Activated B cell treated with CpG ODN at 0.5 μM for 24 hours (primary cell): ENCODE measurements at regions of chr1 and their contacts with region 1.

Region 1: GRCh38 chr1:36450270-36450918 is at the start of gene OSCP1:
- DNase-seq: peak; percentile 88
- ATAC-seq: peak; percentile 97
- H3K4me3 Mint-ChIP-seq: peak within 1 kb of the TSS; percentile 90
- H3K27ac Mint-ChIP-seq: peak within 1 kb of the TSS; percentile 97
- H3K4me1 Mint-ChIP-seq: peaks cover 18% of the 10 kb centered on the region
- H3K27me3 Mint-ChIP-seq: no peaks in the 10 kb centered on the region
- CTCF ChIP-seq: no peak
- total RNA-seq, gene OSCP1: 1.2 and 1.8 TPM in 2 replicates

Region 2: DNA sequence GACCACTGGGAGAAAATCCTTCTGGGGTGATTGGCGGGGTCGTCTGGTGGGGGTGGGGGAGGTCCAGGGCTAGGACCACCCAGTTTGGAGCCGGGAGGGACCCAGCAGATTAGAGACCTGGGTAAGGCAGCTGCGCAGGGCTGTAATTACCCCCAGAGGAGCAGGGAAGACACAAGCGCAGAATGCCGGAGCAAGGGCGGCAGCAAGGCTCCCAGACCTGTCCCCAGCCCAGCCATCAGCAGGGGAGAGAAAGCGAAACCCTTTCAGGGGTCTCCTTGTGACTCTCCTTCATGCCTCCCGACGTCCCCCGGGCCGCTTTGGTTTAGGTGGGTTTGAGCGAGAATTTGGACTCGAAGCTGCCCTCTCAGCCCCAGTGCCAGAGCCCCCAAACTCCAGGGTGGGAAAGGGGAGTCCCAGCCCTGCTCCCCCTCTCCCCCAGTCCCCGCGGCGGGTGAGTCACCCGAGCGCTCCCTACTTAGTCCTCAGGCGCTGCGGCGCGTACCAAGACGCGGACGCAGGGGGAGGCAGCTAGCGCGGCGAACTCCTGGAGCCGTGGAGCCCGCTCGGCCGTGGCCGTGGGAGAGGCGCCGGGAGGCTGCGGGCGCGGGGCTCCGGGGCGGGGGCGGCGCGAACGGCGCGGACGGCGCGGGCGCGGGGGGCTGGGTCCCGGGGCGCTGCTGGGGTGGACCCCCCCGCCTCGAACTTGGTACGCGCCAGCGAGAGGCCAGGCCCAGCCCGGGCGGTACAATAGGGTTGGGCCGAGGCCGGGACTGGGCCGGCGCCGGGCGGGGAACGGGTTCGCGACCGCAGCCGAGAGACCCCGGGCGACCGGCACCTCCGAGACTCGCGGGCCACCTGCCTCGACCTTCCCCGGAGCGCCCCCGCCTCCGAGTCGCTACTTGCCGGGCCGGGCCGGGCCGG is 294.7 kb before region 1 on chr1 and contains the start of gene MAP7D1:
- CTCF ChIA-PET with region 1: no interaction called
- POLR2A ChIA-PET with region 1: no interaction called
- intact Hi-C with region 1: loop called (anchors 2 kb)
- DNase-seq: peak; percentile 88
- ATAC-seq: peak; percentile 76
- H3K4me3 Mint-ChIP-seq: peak within 1 kb of the TSS; percentile 89
- H3K27ac Mint-ChIP-seq: peak within 1 kb of the TSS; percentile 90
- H3K4me1 Mint-ChIP-seq: peaks cover 65% of the 10 kb centered on the region
- H3K27me3 Mint-ChIP-seq: no peaks in the 10 kb centered on the region
- CTCF ChIP-seq: no peak
- total RNA-seq, gene MAP7D1: 56.5 and 59.9 TPM in 2 replicates

Region 3: DNA sequence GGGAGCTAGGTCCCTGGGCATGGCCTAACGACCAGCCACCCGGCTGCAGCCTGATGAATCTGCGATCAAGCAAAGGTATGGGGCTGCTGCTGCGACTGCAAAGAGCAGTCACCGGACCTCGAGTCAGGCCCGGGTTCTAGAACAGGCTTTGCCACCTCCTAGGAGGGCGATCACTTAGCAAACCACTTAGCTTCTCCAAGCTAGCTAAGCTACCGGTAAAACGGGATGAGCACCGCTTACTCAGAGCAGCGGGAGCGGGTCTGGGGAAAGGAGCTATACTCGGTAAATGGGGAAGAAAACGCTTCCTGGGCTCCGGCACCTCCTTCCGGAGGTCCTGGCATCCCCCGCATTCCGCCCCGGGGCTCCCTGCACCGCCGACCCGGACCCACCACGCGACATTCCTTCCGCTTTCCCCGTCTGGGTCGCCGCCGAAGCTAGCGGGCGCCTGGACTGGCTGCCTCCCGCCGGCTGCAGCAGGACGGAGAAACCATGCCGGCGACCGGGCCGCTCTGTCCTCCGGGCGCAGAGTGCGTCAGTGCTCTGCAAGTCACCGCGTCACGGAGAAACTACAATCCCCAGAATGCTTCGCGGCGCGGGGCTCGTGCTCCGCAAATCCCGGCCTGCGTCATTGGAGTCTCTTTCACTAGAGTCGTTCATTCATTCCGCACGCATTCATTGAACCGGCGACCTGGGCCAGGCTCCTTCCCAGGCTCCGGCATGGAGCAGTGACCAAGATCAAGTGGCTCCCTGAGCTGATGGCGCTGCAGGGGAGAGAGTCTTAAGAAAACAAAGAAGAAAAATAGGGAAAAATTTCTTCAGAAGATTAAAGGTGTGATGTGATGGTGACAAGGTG is 52.8 kb before region 1 on chr1 and contains the start of gene LSM10:
- CTCF ChIA-PET with region 1: interaction called, 3 read pairs
- POLR2A ChIA-PET with region 1: interaction called, 8 read pairs
- intact Hi-C with region 1: loop called (anchors 2 kb)
- DNase-seq: peak; percentile 87
- ATAC-seq: peak; percentile 82
- H3K4me3 Mint-ChIP-seq: peak within 1 kb of the TSS; percentile 99
- H3K27ac Mint-ChIP-seq: peak within 1 kb of the TSS; percentile 95
- H3K4me1 Mint-ChIP-seq: peaks cover 68% of the 10 kb centered on the region
- H3K27me3 Mint-ChIP-seq: no peaks in the 10 kb centered on the region
- CTCF ChIP-seq: no peak
- total RNA-seq, gene LSM10: 59.8 and 62.7 TPM in 2 replicates

Region 4: GRCh38 chr1:36463803-36464604 is 13.6 kb after region 1 on chr1 and contains the start of gene MRPS15:
- CTCF ChIA-PET with region 1: interaction called, 3 read pairs
- POLR2A ChIA-PET with region 1: interaction called, 114 read pairs
- intact Hi-C with region 1: loop called (anchors 1 kb)
- DNase-seq: peak; percentile 90
- ATAC-seq: peak; percentile 95
- H3K4me3 Mint-ChIP-seq: peak within 1 kb of the TSS; percentile 96
- H3K27ac Mint-ChIP-seq: peak within 1 kb of the TSS; percentile 98
- H3K4me1 Mint-ChIP-seq: peaks cover 27% of the 10 kb centered on the region
- H3K27me3 Mint-ChIP-seq: no peaks in the 10 kb centered on the region
- CTCF ChIP-seq: no peak
- total RNA-seq, gene MRPS15: 63.5 and 67.0 TPM in 2 replicates

Region 5: GRCh38 chr1:36691374-36691773 is 241.0 kb after region 1 on chr1:
- CTCF ChIA-PET with region 1: no interaction called
- POLR2A ChIA-PET with region 1: no interaction called
- intact Hi-C with region 1: no loop called
- DNase-seq: no peak
- ATAC-seq: no peak
- H3K4me3 Mint-ChIP-seq: no peak overlapping the region
- H3K27ac Mint-ChIP-seq: no peak overlapping the region
- H3K4me1 Mint-ChIP-seq: no peaks in the 10 kb centered on the region
- H3K27me3 Mint-ChIP-seq: peaks cover 33% of the 10 kb centered on the region
- CTCF ChIP-seq: no peak